ENCODE measurements at regions of chr20 and their contacts with region 1.

Region 1: DNA sequence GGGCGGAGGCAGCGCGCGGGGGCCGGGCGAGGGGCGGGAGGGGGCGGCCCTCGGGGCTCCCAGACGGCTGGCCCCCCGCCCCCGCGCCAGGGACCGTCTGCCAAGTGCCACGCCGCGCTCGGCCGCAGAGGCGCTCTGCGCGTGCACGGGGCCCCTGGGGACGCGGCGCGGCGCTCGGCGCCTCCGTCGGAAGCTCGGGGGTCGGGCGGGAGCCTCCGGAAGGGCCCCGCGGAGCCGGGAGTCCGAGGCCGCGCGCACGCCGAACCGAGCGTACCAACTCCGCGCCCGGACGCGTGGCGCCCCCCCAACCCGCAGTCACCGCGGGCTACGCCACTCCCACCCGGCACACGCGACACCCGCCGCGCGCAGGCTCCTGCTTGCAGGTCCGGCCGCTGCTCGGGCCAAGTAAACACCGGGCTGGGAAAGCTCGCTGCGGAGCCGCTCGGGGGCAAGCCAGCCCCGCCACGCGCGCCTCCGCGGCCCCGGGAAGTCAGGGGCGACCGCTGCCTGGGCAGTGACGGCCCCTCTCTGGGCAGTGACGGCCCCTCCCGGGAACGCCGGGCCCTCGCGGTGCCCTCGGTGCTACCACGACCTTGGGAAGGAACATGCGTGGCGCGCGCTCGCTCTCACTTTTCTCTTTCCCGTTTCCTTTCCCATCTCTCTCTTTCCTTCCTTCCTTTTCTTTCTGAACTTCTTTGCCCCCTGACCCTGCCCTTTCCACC is 384 bp upstream of the PREX1 start:
- DNase-seq: peak; percentile 87
- H3K4me3 Mint-ChIP-seq: peak overlapping the region; percentile 77
- H3K27ac Mint-ChIP-seq: peak overlapping the region; percentile 41
- H3K4me1 Mint-ChIP-seq: peaks cover 13% of the 10 kb centered on the region
- H3K27me3 Mint-ChIP-seq: peaks cover 5% of the 10 kb centered on the region

Region 2: GRCh38 chr20:48657475-48658470 is 170.4 kb before region 1 on chr20:
- CTCF ChIA-PET with region 1: interaction called, 14 read pairs
- POLR2A ChIA-PET with region 1: interaction called, 5 read pairs
- DNase-seq: peak; percentile 74
- H3K4me3 Mint-ChIP-seq: no peak overlapping the region
- H3K27ac Mint-ChIP-seq: peak overlapping the region; percentile 27
- H3K4me1 Mint-ChIP-seq: peaks cover 11% of the 10 kb centered on the region
- H3K27me3 Mint-ChIP-seq: no peaks in the 10 kb centered on the region

Region 3: GRCh38 chr20:48722737-48723191 is 105.4 kb before region 1 on chr20:
- CTCF ChIA-PET with region 1: interaction called, 3 read pairs
- POLR2A ChIA-PET with region 1: interaction called, 31 read pairs
- DNase-seq: no peak
- H3K4me3 Mint-ChIP-seq: no peak overlapping the region
- H3K27ac Mint-ChIP-seq: peak overlapping the region; percentile 64
- H3K4me1 Mint-ChIP-seq: peaks cover 76% of the 10 kb centered on the region
- H3K27me3 Mint-ChIP-seq: no peaks in the 10 kb centered on the region

Region 4: DNA sequence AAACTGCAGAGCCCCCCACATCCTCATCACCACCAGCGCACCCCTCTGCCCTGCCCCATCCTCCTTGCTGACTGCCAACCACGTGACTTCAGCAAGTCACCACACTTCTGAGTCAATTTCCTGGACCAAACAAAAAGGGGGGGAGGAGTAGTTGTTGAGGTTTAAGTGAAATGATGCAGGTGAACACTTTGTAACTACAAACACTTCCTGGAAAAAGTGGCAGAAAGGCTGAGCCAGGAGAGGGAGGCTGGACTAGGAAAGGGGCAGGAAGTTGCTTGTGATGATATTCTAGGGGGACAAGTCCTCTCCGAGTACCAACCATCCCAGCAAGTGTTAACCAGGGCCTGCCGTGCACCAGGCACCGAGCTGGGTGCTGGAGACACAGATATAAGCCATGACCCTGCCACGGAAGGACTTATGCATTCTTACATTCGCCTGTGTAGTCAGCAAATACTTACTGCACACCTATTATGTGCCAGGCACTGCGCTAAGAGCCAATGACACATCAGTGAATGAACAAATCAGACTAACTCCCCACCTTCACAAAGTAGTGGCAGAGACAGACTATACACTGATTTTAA is 67.7 kb before region 1 on chr20:
- CTCF ChIA-PET with region 1: interaction called, 3 read pairs
- POLR2A ChIA-PET with region 1: interaction called, 21 read pairs
- DNase-seq: peak; percentile 81
- H3K4me3 Mint-ChIP-seq: peak overlapping the region; percentile 57
- H3K27ac Mint-ChIP-seq: peak overlapping the region; percentile 100
- H3K4me1 Mint-ChIP-seq: peaks cover 93% of the 10 kb centered on the region
- H3K27me3 Mint-ChIP-seq: no peaks in the 10 kb centered on the region

Region 5: DNA sequence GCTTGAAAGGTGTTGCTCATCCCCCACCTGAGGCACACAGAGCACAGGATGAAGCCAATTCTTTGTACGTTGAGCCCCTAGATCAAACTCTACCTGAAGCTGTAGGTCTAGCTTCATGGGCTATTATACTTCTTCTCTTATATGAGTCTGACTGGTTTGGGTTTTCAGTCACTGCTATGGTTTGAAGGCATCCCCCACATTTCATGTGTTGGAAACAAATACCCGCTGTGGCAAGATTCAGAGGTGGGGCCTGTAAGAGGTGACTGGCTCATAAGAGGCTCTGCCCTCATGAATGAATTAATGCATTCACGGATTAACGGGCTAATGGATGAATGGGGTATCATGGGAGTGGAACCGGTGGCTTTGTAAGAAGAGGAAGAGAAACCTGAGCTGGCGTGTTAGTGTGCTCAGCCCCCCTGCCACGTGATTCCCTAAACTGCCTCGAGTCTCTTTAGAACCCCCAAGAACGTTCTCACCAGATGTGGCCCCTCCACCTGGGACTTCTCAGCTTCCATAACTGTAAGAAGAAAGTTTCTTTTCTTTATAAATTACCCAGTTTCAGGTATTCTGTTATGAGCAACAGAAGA is 39.6 kb before region 1 on chr20:
- CTCF ChIA-PET with region 1: no interaction called
- POLR2A ChIA-PET with region 1: interaction called, 11 read pairs
- DNase-seq: no peak
- H3K4me3 Mint-ChIP-seq: no peak overlapping the region
- H3K27ac Mint-ChIP-seq: no peak overlapping the region
- H3K4me1 Mint-ChIP-seq: peaks cover 52% of the 10 kb centered on the region
- H3K27me3 Mint-ChIP-seq: no peaks in the 10 kb centered on the region

Measured in activated CD4-positive, alpha-beta memory T cell treated with anti-CD3 and anti-CD28 coated beads, Interleukin-2, amount 10 ng/mL, durations not matched to agents 7 days and 5 days (primary cell).